Activated CD4-positive, alpha-beta memory T cell treated with anti-CD3 and anti-CD28 coated beads, Interleukin-2, amount 10 ng/mL, durations not matched to agents 7 days and 5 days (primary cell): ENCODE measurements at regions of chr6 and their contacts with region 1.

Region 1: GRCh38 chr6:109073344-109074132 is 21.1 kb downstream of the SESN1 start:
- DNase-seq: peak; percentile 47
- H3K4me3 Mint-ChIP-seq: no peak overlapping the region
- H3K27ac Mint-ChIP-seq: no peak overlapping the region
- H3K4me1 Mint-ChIP-seq: peaks cover 21% of the 10 kb centered on the region
- H3K27me3 Mint-ChIP-seq: no peaks in the 10 kb centered on the region

Region 2: GRCh38 chr6:108518714-108519576 is 554.6 kb before region 1 on chr6:
- CTCF ChIA-PET with region 1: interaction called, 15 read pairs
- POLR2A ChIA-PET with region 1: no interaction called
- DNase-seq: no peak
- H3K4me3 Mint-ChIP-seq: no peak overlapping the region
- H3K27ac Mint-ChIP-seq: no peak overlapping the region
- H3K4me1 Mint-ChIP-seq: no peaks in the 10 kb centered on the region
- H3K27me3 Mint-ChIP-seq: peaks cover 4% of the 10 kb centered on the region

Region 3: DNA sequence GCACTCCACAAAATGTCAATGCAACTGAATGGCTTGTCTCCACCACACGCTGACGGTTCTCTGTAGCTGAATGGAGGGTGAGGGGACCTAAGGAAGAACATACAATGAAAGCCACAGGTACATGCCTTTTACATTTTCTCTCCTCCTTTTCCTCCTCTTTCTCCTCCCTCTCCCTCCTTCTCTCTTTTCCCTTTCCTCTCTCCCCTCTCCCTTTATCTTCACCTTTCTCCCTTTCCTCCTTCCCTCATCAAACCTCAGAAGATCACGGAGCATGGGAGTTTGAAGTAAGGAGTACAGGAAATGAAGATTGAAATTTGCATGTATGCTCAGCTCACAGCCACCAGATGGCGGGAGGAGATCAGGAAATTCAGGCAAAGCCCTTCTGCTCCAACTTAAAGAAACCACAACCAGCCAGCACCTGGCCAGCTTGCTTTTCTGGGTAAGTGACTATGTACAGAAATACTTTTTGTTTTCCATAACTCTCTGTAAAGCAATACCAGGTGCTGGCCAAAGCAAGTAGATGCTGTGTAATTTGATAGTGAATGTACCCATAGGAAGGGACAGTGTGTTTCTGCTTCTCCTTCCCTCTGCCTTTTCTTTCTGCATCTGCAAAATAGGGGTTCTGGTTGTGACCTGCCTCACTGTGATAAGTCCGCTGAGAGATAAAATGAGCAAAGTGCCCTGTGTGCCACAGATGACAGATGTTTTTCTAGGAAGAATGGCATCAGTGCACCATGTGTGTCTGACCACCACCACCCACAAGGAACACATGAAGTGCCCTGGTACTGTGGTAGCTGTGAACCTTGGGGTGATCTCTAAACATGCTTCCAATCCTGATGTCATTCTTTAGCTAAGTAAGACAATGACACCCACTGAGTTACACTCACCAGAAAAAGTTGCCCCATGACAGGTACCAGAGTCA is 531.4 kb before region 1 on chr6:
- CTCF ChIA-PET with region 1: interaction called, 70 read pairs
- POLR2A ChIA-PET with region 1: interaction called, 5 read pairs
- DNase-seq: peak; percentile 78
- H3K4me3 Mint-ChIP-seq: peak overlapping the region; percentile 40
- H3K27ac Mint-ChIP-seq: no peak overlapping the region
- H3K4me1 Mint-ChIP-seq: peaks cover 23% of the 10 kb centered on the region
- H3K27me3 Mint-ChIP-seq: peaks cover 18% of the 10 kb centered on the region

Region 4: DNA sequence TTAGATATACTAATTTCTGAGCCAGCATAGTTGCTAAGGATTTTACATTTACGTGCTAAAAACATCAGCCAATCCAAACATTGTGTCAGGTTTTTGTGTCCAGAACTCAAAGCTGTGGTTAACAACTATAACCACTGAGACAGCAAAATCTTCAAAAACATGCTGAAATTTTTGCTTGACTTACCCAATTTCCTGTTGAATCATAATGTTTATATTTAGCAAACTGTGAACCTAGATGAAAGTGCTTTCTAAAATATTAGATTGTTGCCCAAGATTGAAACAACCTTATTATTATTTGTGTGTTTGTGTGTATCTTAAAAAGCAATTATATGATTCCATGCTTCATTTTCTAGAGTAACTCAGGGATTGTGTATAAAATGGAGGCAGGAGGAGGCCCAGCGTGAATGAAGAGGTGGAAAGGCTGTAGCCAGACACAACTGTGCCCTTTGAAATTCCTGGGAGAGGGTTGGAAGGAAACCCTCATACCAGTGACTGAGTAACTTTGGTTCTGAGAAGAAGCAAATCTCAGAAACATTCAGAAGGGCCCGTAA is 177.4 kb before region 1 on chr6:
- CTCF ChIA-PET with region 1: interaction called, 29 read pairs
- POLR2A ChIA-PET with region 1: interaction called, 3 read pairs
- DNase-seq: no peak
- H3K4me3 Mint-ChIP-seq: peak overlapping the region; percentile 45
- H3K27ac Mint-ChIP-seq: peak overlapping the region; percentile 93
- H3K4me1 Mint-ChIP-seq: peaks cover 53% of the 10 kb centered on the region
- H3K27me3 Mint-ChIP-seq: peaks cover 1% of the 10 kb centered on the region

Region 5: DNA sequence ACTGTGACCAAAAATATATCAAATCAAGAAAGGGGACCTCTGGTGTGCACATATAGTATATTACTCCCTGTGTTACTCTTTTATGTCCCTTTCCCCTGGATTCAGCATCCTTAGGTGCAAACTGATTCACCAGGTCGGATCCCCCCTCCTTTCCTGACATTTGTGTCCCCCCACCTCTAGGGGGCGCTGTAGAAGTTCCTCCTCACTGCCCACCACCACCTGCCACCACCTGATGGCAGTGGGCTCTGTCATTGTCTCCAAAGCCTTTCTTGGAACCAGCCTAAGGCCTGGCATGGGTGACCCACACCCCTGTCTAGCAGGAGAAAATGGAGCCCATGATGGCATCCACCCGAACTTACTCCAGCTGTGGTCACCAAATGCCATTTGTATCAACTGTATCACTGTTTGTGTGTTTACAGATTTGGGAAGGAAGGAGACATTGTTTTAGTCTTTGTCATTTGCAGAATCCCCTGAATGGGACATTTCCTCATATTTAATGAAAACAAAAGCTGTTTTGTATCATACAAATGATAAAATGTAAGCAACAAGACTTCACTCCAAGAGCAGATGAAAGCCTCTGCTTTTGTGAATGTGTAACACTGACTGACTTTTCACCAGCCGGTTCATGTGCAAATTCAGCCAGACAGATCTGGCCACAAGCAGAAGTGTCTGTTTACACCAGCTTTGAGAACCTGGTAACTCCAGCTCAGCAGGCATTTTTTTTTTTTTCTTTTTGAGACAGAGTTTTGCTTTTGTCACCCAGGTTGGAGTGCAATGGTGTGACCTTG is 159.1 kb before region 1 on chr6:
- CTCF ChIA-PET with region 1: interaction called, 15 read pairs
- POLR2A ChIA-PET with region 1: no interaction called
- DNase-seq: peak; percentile 43
- H3K4me3 Mint-ChIP-seq: no peak overlapping the region
- H3K27ac Mint-ChIP-seq: peak overlapping the region; percentile 21
- H3K4me1 Mint-ChIP-seq: peaks cover 8% of the 10 kb centered on the region
- H3K27me3 Mint-ChIP-seq: peaks cover 52% of the 10 kb centered on the region

Region 6: DNA sequence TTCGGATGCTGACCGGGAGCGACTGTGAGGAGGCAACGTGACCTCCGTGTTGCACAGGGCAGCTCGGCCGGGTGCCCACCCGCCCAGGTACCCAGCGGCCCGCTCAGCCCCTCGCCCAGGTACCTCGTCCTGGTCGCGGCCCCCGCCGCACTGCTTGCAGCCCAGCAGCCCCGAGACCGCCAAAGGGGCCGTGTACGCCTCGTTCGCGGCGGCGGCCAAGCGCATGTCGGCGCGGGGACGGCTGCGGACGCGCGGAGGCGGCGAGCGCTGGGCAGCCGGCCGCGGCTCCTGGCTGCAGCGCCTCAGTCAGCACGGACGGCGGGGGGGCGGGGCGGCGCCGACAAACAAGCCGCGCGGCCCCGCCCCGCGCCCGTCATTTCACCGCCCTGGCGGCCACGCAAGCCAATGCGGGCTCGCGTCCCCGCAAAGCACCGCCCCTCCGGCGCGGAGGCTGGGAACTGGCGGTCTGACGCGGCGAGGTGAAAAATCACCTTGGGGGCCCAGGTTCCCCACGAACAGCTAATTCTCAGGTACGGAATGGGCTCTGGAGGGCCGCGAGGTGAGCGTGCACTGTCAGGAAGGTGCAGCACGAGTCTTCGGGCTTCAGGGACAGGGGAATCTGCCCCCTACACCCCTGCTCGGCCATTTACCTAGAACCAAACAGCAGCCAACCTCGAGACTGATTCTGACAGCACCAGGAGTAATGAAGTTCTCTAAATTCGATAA is 64.1 kb before region 1 on chr6:
- CTCF ChIA-PET with region 1: no interaction called
- POLR2A ChIA-PET with region 1: interaction called, 14 read pairs
- DNase-seq: peak; percentile 92
- H3K4me3 Mint-ChIP-seq: peak overlapping the region; percentile 88
- H3K27ac Mint-ChIP-seq: peak overlapping the region; percentile 72
- H3K4me1 Mint-ChIP-seq: peaks cover 39% of the 10 kb centered on the region
- H3K27me3 Mint-ChIP-seq: peaks cover 8% of the 10 kb centered on the region

Region 7: DNA sequence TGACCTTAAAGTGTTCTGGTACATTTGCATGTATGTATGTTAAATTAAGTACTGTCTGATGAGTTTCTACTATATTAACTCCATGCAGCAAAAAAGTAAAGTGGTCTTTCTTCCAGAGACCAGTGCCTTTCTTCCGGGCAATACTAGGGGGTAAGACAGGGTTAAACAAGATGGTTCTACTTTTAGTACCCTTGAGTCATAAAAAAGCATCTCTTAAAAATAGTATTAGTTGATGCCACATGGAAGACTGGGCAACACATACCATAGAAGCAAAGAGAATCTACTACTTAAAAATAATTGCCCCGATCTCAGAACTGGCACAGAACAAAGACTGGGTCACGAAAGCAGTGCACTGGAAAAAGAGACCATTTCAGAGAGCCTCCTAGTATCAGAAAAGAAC is 45.1 kb before region 1 on chr6:
- CTCF ChIA-PET with region 1: no interaction called
- POLR2A ChIA-PET with region 1: no interaction called
- DNase-seq: no peak
- H3K4me3 Mint-ChIP-seq: no peak overlapping the region
- H3K27ac Mint-ChIP-seq: no peak overlapping the region
- H3K4me1 Mint-ChIP-seq: peaks cover 5% of the 10 kb centered on the region
- H3K27me3 Mint-ChIP-seq: no peaks in the 10 kb centered on the region

Region 8: DNA sequence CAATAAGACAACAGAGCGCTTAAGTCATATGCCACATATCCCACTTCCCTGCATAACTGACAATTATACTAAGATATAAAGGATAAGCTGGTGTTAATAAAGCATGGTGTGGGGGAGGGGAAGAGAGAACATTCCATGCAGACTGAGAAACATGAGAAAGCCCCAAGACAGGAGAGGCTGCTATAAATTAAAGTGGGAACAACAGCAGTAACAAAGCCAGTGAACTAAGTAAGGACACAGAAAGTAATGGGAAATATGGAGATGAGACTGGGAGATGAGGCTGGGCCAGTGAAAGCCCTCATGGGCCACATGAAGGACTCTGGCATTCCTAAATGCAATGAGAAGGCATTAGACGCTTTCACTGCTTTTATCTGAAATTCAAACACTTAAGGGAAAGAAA is 20.2 kb before region 1 on chr6:
- CTCF ChIA-PET with region 1: interaction called, 10 read pairs
- POLR2A ChIA-PET with region 1: no interaction called
- DNase-seq: no peak
- H3K4me3 Mint-ChIP-seq: no peak overlapping the region
- H3K27ac Mint-ChIP-seq: no peak overlapping the region
- H3K4me1 Mint-ChIP-seq: peaks cover 4% of the 10 kb centered on the region
- H3K27me3 Mint-ChIP-seq: no peaks in the 10 kb centered on the region

Region 9: GRCh38 chr6:109153752-109154151 is 80.2 kb after region 1 on chr6:
- CTCF ChIA-PET with region 1: no interaction called
- POLR2A ChIA-PET with region 1: no interaction called
- DNase-seq: no peak
- H3K4me3 Mint-ChIP-seq: no peak overlapping the region
- H3K27ac Mint-ChIP-seq: no peak overlapping the region
- H3K4me1 Mint-ChIP-seq: no peaks in the 10 kb centered on the region
- H3K27me3 Mint-ChIP-seq: no peaks in the 10 kb centered on the region